Left colon (tissue), 2 donors: ENCODE measurements at regions of chr9 and their contacts with region 1.

Region 1: GRCh38 chr9:15552636-15553527 is at the start of gene CCDC171:
- DNase-seq: peak; percentile 92 to 95
- ATAC-seq: peak; percentile 92
- total RNA-seq, gene CCDC171: 3.2 to 3.5 TPM

Region 2: DNA sequence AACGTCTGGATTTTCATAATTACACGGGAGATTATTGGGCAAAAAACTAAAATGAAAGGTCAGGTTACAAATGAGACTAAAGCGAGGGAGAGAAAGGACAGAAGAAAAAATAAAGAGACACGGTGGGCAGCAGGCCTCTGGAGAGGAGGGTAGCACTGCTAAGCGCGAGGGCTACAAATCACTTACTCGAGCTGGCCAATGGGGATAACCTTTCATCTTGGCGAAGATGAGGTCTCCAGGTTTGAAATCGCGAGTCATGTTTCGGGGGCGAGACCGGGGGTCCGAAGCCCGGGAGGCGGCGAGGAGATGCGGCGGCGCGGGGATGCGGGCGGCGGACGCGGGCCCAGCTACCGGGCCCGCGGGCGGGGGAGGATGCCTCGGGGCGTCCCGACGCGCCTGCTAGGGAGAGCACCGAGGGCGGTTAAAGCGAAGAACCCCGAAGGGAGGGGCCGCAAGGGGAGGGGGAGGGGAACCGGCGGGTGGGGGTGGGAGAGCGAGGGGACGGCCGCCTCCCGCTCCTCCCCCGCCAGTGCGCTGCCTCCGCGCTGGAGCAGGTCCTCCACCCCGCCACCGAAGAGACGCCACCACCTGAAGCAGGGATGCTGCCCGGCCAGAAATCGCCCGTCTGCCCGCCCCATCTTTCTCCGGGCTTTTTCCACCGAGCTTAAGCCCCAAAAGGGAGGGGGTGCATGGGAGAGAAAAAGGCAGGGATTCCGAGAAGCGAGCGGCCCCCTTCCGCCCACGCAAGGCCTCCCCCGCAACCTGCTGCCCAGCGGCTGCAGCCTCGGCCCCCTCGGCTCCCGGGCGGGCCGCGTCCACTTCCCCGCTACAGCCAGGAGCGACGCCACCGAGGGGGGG is 42.7 kb before region 1 on chr9:
- intact Hi-C with region 1: loop called in 1 of 2 experiments (anchors 10 kb)
- DNase-seq: peak; percentile 35 to 59
- ATAC-seq: peak; percentile 49